ENCODE measurements at regions of chr11 and their contacts with region 1.

Region 1: DNA sequence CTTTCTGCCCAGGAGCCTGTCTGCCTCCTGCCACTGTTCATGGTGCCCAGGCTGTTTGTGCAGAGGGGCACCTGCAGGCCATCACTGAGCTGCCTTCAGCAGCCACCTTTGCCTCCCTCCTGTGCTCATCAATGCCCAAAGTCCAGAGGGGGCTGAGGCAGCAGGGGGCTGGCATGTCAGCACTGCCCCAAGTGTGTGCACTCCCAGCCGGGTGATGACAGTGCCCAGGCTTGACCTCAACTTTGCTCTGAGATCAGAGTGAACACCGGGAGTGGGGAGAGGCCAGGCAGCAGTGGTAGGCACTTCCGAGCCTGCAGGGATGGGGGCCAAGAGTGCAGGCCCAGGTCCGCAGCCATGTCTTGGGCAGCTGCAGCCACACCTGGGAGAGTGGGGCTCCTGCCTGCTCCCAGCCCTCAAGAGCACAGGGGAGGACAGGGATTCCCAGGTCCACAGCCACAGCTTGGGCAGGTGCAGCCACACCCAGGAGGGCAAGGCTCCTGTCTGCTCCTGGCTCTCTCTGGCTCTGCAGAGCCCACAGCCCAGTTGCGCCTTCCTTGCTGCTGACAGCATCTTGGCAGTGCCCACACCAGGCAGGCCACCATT is 15.2 kb downstream of the SAA4 start:
- DNase-seq: no peak
- ATAC-seq: no peak
- H3K4me3 ChIP-seq: no peak overlapping the region
- H3K4me3 Mint-ChIP-seq: no peak overlapping the region
- H3K27ac ChIP-seq: no peak overlapping the region
- H3K27ac Mint-ChIP-seq: no peak overlapping the region
- H3K4me1 ChIP-seq: no peaks in the 10 kb centered on the region
- H3K4me1 Mint-ChIP-seq: no peaks in the 10 kb centered on the region
- H3K27me3 ChIP-seq: no peaks in the 10 kb centered on the region
- H3K27me3 Mint-ChIP-seq: peaks cover 9% of the 10 kb centered on the region
- CTCF ChIP-seq: no peak

Region 2: GRCh38 chr11:18277565-18278271 is 56.3 kb after region 1 on chr11:
- CTCF ChIA-PET with region 1: no interaction called
- POLR2A ChIA-PET with region 1: no interaction called
- intact Hi-C with region 1: loop called in 1 of 2 experiments (anchors 10 kb)
- DNase-seq: peak in 3 of 14 experiments; percentile 14 to 60 (median 49)
- ATAC-seq: no peak
- H3K4me3 ChIP-seq: no peak overlapping the region
- H3K4me3 Mint-ChIP-seq: no peak overlapping the region
- H3K27ac ChIP-seq: no peak overlapping the region
- H3K27ac Mint-ChIP-seq: no peak overlapping the region
- H3K4me1 ChIP-seq: peaks cover 6% of the 10 kb centered on the region
- H3K4me1 Mint-ChIP-seq: peaks cover 7% of the 10 kb centered on the region
- H3K27me3 ChIP-seq: no peaks in the 10 kb centered on the region
- H3K27me3 Mint-ChIP-seq: no peaks in the 10 kb centered on the region
- CTCF ChIP-seq: no peak

Region 3: DNA sequence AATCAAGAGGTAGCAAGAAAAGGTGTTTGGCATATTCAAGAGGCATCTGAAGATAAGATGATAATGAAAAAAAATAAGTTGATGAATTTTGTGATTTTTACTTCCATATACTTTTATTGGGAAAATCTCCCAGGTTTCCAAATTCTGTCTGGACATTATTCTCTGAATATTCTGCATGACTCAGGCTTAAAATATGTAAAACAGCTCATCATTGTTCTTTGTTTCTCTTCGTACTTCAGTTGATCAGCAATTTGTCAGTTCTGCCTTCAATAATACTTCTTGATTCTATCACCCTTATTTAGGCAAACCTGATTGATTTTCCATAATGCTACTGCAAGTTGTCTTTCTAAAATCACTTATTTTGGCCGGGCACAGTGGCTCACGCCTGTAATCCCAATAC is 131.2 kb after region 1 on chr11:
- CTCF ChIA-PET with region 1: no interaction called
- POLR2A ChIA-PET with region 1: no interaction called
- intact Hi-C with region 1: no loop called
- DNase-seq: no peak
- ATAC-seq: no peak
- H3K4me3 ChIP-seq: no peak overlapping the region
- H3K4me3 Mint-ChIP-seq: no peak overlapping the region
- H3K27ac ChIP-seq: no peak overlapping the region
- H3K27ac Mint-ChIP-seq: no peak overlapping the region
- H3K4me1 ChIP-seq: no peaks in the 10 kb centered on the region
- H3K4me1 Mint-ChIP-seq: peaks cover 10% of the 10 kb centered on the region
- H3K27me3 ChIP-seq: no peaks in the 10 kb centered on the region
- H3K27me3 Mint-ChIP-seq: no peaks in the 10 kb centered on the region
- CTCF ChIP-seq: no peak

Measured in CD4-positive, alpha-beta T cell (primary cell).